MCF 10A (cell line): ENCODE measurements at regions of chr4 and their contacts with region 1.

Region 1: DNA sequence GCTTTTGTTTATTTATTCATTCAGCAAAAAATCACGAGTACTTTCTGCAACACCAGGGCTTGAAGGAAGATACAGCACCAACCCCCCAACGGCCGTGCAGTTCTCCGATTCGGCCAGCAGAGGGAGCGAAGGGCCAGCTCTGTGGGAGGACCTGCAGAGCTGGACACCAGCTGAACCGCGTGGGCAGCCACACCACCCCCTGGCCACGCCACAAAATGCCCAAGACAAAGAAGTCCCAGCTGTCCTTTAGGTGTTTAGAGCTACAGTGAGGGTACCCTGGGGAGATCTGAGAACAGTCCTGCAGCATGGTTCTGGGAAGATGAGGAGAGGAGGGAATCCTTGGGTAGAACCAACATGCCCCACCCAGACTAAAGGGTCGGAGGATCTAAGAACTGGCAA is 83.1 kb downstream of the RELL1 start:
- DNase-seq: peak; percentile 76
- H3K4me3 Mint-ChIP-seq: no peak overlapping the region
- H3K27ac Mint-ChIP-seq: no peak overlapping the region
- H3K4me1 Mint-ChIP-seq: peaks cover 23% of the 10 kb centered on the region
- H3K27me3 Mint-ChIP-seq: no peaks in the 10 kb centered on the region
- CTCF ChIP-seq: peak; percentile 94

Region 2: GRCh38 chr4:37452952-37453280 is 150.2 kb before region 1 on chr4:
- CTCF ChIA-PET with region 1: interaction called, 5 read pairs
- POLR2A ChIA-PET with region 1: interaction called, 3 read pairs
- intact Hi-C with region 1: loop called (anchors 2 kb)
- DNase-seq: peak; percentile 89
- H3K4me3 Mint-ChIP-seq: peak overlapping the region; percentile 71
- H3K27ac Mint-ChIP-seq: no peak overlapping the region
- H3K4me1 Mint-ChIP-seq: no peaks in the 10 kb centered on the region
- H3K27me3 Mint-ChIP-seq: peaks cover 23% of the 10 kb centered on the region
- CTCF ChIP-seq: peak; percentile 56

Region 3: GRCh38 chr4:37615059-37615719 is 12.1 kb after region 1 on chr4:
- CTCF ChIA-PET with region 1: interaction called, 66 read pairs
- POLR2A ChIA-PET with region 1: interaction called, 3 read pairs
- intact Hi-C with region 1: no loop called
- DNase-seq: no peak
- H3K4me3 Mint-ChIP-seq: no peak overlapping the region
- H3K27ac Mint-ChIP-seq: no peak overlapping the region
- H3K4me1 Mint-ChIP-seq: no peaks in the 10 kb centered on the region
- H3K27me3 Mint-ChIP-seq: no peaks in the 10 kb centered on the region
- CTCF ChIP-seq: no peak

Region 4: GRCh38 chr4:37648096-37648817 is 45.2 kb after region 1 on chr4:
- CTCF ChIA-PET with region 1: interaction called, 13 read pairs
- POLR2A ChIA-PET with region 1: interaction called, 3 read pairs
- intact Hi-C with region 1: loop called (anchors 1 kb)
- DNase-seq: peak; percentile 97
- H3K4me3 Mint-ChIP-seq: peak overlapping the region; percentile 52
- H3K27ac Mint-ChIP-seq: peak overlapping the region; percentile 81
- H3K4me1 Mint-ChIP-seq: peaks cover 5% of the 10 kb centered on the region
- H3K27me3 Mint-ChIP-seq: no peaks in the 10 kb centered on the region
- CTCF ChIP-seq: no peak

Region 5: GRCh38 chr4:37675587-37676290 is 72.7 kb after region 1 on chr4:
- CTCF ChIA-PET with region 1: interaction called, 18 read pairs
- POLR2A ChIA-PET with region 1: no interaction called
- intact Hi-C with region 1: no loop called
- DNase-seq: no peak
- H3K4me3 Mint-ChIP-seq: peak overlapping the region; percentile 45
- H3K27ac Mint-ChIP-seq: no peak overlapping the region
- H3K4me1 Mint-ChIP-seq: peaks cover 21% of the 10 kb centered on the region
- H3K27me3 Mint-ChIP-seq: no peaks in the 10 kb centered on the region
- CTCF ChIP-seq: no peak

Region 6: GRCh38 chr4:37780444-37781150 is 177.5 kb after region 1 on chr4:
- CTCF ChIA-PET with region 1: interaction called, 15 read pairs
- POLR2A ChIA-PET with region 1: no interaction called
- intact Hi-C with region 1: no loop called
- DNase-seq: no peak
- H3K4me3 Mint-ChIP-seq: no peak overlapping the region
- H3K27ac Mint-ChIP-seq: no peak overlapping the region
- H3K4me1 Mint-ChIP-seq: no peaks in the 10 kb centered on the region
- H3K27me3 Mint-ChIP-seq: no peaks in the 10 kb centered on the region
- CTCF ChIP-seq: no peak

Region 7: DNA sequence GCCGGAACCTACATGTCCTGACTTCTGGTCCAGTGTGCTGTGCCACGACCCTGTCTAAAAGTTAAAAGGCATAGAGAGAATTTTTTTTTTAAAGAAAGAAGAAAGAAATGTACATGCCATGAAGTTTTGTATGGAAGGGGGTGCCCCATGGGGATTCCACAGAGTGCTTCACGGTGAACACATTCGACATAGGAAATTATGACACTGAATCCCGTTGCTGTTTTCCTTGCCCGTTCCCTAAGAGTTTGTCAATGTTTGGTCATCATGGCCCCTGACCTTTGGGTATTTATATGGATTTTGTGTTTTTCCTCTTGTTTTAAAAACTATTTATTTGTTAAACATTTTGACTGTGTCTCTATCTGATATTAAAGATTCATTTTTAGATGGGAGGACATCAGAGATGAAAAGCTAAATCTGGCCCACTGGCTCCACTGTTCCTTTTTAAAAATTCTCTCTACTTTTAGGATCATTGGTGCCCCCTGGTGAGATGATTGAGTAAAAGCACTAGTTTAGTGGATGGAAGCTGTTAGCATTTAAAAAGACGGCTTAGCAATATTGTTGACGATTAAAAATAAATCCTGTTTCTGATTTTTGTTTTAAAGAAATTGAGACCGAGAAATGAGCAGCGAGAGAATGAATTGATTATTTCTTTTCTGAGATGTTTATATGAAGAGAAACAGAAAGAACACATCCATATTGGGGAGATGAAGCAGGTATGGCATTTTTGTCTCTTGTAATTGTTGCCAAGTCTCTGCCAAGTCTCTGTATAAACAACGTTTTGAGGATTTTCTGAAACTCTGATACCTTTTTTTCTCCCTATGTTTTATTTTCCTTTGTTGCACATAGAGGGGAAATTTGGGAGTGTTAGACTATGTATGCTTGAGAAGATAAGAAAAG is 432.2 kb after region 1 on chr4:
- CTCF ChIA-PET with region 1: interaction called, 21 read pairs
- POLR2A ChIA-PET with region 1: no interaction called
- intact Hi-C with region 1: loop called (anchors 5 kb)
- DNase-seq: peak; percentile 79
- H3K4me3 Mint-ChIP-seq: no peak overlapping the region
- H3K27ac Mint-ChIP-seq: no peak overlapping the region
- H3K4me1 Mint-ChIP-seq: no peaks in the 10 kb centered on the region
- H3K27me3 Mint-ChIP-seq: no peaks in the 10 kb centered on the region
- CTCF ChIP-seq: peak; percentile 62